CD4-positive, alpha-beta memory T cell (primary cell): ENCODE measurements at regions of chr2 and their contacts with region 1.

Region 1: GRCh38 chr2:207625018-207625907 is at the start of gene METTL21A:
- DNase-seq: peak; percentile 96 to 97 (median 97)
- H3K4me3 ChIP-seq: peak within 1 kb of the TSS; percentile 89 to 90
- H3K4me3 Mint-ChIP-seq: peak within 1 kb of the TSS; percentile 94 to 96 (median 95)
- H3K27ac ChIP-seq: peak within 1 kb of the TSS; percentile 97
- H3K27ac Mint-ChIP-seq: peak within 1 kb of the TSS; percentile 92 to 99 (median 97)
- H3K4me1 ChIP-seq: peaks cover 31% of the 10 kb centered on the region
- H3K4me1 Mint-ChIP-seq: peaks cover 16 to 46% (median 31%) of the 10 kb centered on the region in 4 donors
- H3K27me3 ChIP-seq: no peaks in the 10 kb centered on the region
- H3K27me3 Mint-ChIP-seq: no peaks in the 10 kb centered on the region
- total RNA-seq, gene METTL21A: 16.6 to 16.9 TPM

Region 2: DNA sequence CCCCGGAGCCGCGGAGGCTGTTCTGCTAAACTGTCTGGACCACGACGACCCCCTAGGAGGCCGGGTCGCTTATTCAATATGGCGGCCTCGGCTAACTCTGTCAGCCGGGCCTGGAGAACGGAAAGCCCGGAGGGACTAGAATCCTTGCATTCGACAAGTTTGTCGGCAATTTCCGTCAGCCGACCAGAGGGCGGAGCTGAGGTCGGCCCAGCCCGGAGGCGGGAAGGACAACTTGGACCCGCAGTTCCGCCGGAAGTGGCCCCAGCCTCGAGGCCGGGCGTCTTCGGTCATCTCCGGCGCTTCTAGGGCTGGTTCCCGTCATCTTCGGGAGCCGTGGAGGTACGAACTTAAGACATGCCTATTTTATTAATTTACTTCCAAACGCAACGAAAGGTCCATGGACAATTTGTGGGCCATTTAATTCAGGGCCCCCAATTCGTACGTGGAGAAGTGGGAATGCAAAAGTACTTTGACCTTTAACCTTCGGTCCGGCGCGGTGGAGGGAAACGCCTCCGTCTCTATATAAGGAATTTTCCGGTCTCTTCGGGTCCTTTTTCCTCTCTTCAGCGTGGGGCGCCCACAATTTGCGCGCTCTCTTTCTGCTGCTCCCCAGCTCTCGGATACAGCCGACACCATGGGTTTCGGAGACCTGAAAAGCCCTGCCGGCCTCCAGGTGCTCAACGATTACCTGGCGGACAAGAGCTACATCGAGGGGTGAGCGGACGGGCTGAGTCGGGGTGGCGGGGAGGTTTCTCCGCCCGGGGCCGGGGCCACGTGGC is 1465.7 kb before region 1 on chr2 and contains the starts of genes EEF1B2 and NDUFS1:
- CTCF ChIA-PET with region 1: no interaction called
- POLR2A ChIA-PET with region 1: interaction called, 3 read pairs
- intact Hi-C with region 1: loop called (anchors 1 kb)
- DNase-seq: peak; percentile 96 to 97 (median 97)
- H3K4me3 ChIP-seq: peak within 1 kb of the TSS; percentile 69 to 78
- H3K4me3 Mint-ChIP-seq: peak within 1 kb of the TSS; percentile 97 to 100 (median 100)
- H3K27ac ChIP-seq: peak within 1 kb of the TSS; percentile 94
- H3K27ac Mint-ChIP-seq: peak within 1 kb of the TSS; percentile 98 to 100 (median 99)
- H3K4me1 ChIP-seq: peaks cover 47% of the 10 kb centered on the region
- H3K4me1 Mint-ChIP-seq: peaks cover 38 to 71% (median 56%) of the 10 kb centered on the region in 4 donors
- H3K27me3 ChIP-seq: no peaks in the 10 kb centered on the region
- H3K27me3 Mint-ChIP-seq: no peaks in the 10 kb centered on the region
- total RNA-seq, gene EEF1B2: 947 to 1,026 TPM
- total RNA-seq, gene NDUFS1: 53.4 to 57.6 TPM

Region 3: GRCh38 chr2:207571370-207571769 is 53.9 kb before region 1 on chr2:
- CTCF ChIA-PET with region 1: no interaction called
- POLR2A ChIA-PET with region 1: no interaction called
- intact Hi-C with region 1: loop called (anchors 10 kb)
- DNase-seq: no peak
- H3K4me3 ChIP-seq: no peak overlapping the region
- H3K4me3 Mint-ChIP-seq: no peak overlapping the region
- H3K27ac ChIP-seq: no peak overlapping the region
- H3K27ac Mint-ChIP-seq: peak overlapping the region in 2 of 7 donors; percentile 26 to 51
- H3K4me1 ChIP-seq: no peaks in the 10 kb centered on the region
- H3K4me1 Mint-ChIP-seq: peaks cover 14 to 25% (median 20%) of the 10 kb centered on the region in 4 donors
- H3K27me3 ChIP-seq: no peaks in the 10 kb centered on the region
- H3K27me3 Mint-ChIP-seq: no peaks in the 10 kb centered on the region

Region 4: GRCh38 chr2:207725873-207726578 is 100.8 kb after region 1 on chr2:
- CTCF ChIA-PET with region 1: interaction called, 14 read pairs
- POLR2A ChIA-PET with region 1: interaction called, 4 read pairs
- intact Hi-C with region 1: no loop called
- DNase-seq: peak in 3 of 5 donors; percentile 13 to 28 (median 27)
- H3K4me3 ChIP-seq: no peak overlapping the region
- H3K4me3 Mint-ChIP-seq: no peak overlapping the region
- H3K27ac ChIP-seq: no peak overlapping the region
- H3K27ac Mint-ChIP-seq: peak overlapping the region in 3 of 7 donors; percentile 29 to 83 (median 70)
- H3K4me1 ChIP-seq: peaks cover 18% of the 10 kb centered on the region
- H3K4me1 Mint-ChIP-seq: peaks cover 24 to 36% (median 27%) of the 10 kb centered on the region in 4 donors
- H3K27me3 ChIP-seq: no peaks in the 10 kb centered on the region
- H3K27me3 Mint-ChIP-seq: no peaks in the 10 kb centered on the region

Region 5: DNA sequence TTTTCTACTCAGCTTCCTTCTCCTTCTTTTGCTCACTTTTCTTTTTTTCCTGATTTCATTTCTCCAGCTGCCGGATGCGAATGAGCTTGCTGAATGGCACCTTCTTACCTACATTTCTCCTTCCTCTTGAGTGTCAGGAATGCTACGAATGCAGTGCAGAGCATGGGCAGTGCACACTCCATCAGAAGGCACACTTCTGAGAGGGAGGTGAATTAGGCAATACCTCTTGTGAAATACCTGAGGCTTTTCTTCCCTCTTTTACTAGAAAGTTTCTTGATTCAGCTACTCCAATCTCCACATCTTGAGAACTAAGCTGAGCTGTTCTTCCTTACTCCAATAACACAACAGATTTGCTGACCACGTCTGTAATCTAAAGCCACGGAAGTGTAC is 348.9 kb after region 1 on chr2:
- CTCF ChIA-PET with region 1: interaction called, 8 read pairs
- POLR2A ChIA-PET with region 1: no interaction called
- intact Hi-C with region 1: loop called (anchors 1 kb)
- DNase-seq: no peak
- H3K4me3 ChIP-seq: no peak overlapping the region
- H3K4me3 Mint-ChIP-seq: no peak overlapping the region
- H3K27ac ChIP-seq: no peak overlapping the region
- H3K27ac Mint-ChIP-seq: no peak overlapping the region
- H3K4me1 ChIP-seq: no peaks in the 10 kb centered on the region
- H3K4me1 Mint-ChIP-seq: peaks cover 0 to 20% (median 5%) of the 10 kb centered on the region in 4 donors
- H3K27me3 ChIP-seq: no peaks in the 10 kb centered on the region
- H3K27me3 Mint-ChIP-seq: no peaks in the 10 kb centered on the region

Region 6: DNA sequence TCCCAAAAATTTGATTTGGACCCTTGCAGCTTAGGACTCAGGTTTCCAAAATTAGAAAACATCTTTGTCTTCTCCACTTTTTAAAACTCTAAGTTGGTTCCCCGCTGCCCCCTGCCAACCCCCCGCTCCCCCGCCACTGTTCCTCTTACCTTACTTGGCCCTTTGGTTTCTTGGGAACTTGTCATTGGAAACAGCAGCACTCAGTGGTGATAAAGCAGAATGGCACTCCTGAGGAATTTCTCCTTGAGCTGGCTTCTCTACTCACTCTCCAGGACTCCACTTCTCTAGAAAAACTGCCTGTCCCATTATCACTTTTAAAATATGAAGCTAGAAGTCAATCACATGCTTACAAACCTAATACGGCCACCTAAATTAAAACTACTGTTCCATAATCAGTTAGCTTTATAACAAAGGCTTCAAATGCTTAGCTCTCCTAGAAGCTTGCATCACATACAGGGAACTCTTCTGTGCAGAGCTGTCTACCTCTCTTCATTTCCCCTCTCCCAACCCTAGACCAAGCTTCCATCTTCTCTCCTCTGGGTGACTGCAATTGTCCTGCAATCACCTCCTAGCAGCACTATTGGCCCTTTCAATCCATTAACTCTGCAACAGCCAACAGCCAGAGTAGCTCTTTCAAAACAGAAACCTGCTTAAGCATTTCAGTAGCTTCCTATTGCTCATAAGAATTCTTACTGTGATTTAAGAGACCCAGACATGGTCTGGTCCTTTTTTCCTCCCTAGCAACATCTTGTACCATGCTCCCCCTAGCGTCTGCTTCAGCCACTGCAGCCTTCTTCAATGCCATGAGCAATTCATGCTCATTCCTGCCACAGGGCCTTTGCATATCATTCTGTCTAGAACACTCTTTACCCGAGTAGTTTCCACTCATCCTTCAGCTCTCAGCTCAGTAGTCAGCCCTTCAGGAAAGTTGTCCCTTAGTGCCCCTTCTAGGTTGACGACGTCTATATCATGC is 415.2 kb after region 1 on chr2:
- CTCF ChIA-PET with region 1: interaction called, 12 read pairs
- POLR2A ChIA-PET with region 1: interaction called, 6 read pairs
- intact Hi-C with region 1: loop called (anchors 1 kb)
- DNase-seq: peak; percentile 37 to 58 (median 55)
- H3K4me3 ChIP-seq: no peak overlapping the region
- H3K4me3 Mint-ChIP-seq: no peak overlapping the region
- H3K27ac ChIP-seq: no peak overlapping the region
- H3K27ac Mint-ChIP-seq: peak overlapping the region in 3 of 7 donors; percentile 31 to 42 (median 42)
- H3K4me1 ChIP-seq: no peaks in the 10 kb centered on the region
- H3K4me1 Mint-ChIP-seq: no peaks in the 10 kb centered on the region
- H3K27me3 ChIP-seq: no peaks in the 10 kb centered on the region
- H3K27me3 Mint-ChIP-seq: peaks cover 0 to 2% of the 10 kb centered on the region in 2 donors

Region 7: DNA sequence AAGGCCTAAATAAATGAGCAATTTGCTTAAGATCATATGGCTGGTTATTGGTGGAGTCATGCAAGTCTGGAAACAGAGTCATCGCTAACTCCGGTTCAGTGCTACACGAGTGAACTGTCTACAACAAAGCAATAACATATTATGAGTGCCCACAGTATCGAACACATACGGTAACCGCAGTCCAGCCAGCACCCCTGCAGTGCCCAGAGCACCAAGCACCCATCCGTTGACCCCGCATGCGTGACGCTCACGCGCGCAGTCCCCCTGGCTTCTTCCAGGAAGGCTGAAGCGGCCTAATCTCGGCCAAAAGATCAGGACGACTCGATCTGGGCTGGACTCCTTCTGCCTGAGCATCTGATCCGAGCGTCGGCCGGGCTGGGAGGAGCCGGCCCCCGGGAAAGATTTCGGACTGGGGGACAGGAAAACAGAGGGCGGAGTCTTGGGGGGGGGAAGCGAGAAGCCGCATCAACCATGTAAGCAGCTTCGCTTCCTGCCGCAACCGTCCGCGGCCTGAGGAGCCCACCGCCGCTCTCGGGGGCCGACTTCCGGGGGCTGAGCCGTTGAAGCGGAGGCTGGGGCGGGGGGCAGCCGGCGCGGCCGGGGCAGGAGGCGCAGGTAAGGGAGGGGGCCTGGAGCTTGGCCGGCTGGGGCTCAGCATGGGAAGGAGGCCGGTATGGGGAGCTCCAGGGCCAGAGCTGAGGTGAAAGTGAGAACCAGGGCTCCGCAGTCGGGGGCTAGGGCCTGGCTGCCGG is 640.7 kb after region 1 on chr2 and contains the start of gene PIKFYVE:
- CTCF ChIA-PET with region 1: interaction called, 3 read pairs
- POLR2A ChIA-PET with region 1: interaction called, 13 read pairs
- intact Hi-C with region 1: loop called (anchors 1 kb)
- DNase-seq: peak; percentile 80 to 92 (median 87)
- H3K4me3 ChIP-seq: peak within 1 kb of the TSS; percentile 51 to 95
- H3K4me3 Mint-ChIP-seq: peak within 1 kb of the TSS; percentile 92 to 99 (median 96)
- H3K27ac ChIP-seq: peak within 1 kb of the TSS; percentile 75
- H3K27ac Mint-ChIP-seq: peak within 1 kb of the TSS; percentile 86 to 97 (median 95)
- H3K4me1 ChIP-seq: peaks cover 46% of the 10 kb centered on the region
- H3K4me1 Mint-ChIP-seq: peaks cover 27 to 60% (median 39%) of the 10 kb centered on the region in 4 donors
- H3K27me3 ChIP-seq: no peaks in the 10 kb centered on the region
- H3K27me3 Mint-ChIP-seq: no peaks in the 10 kb centered on the region
- total RNA-seq, gene PIKFYVE: 44.5 to 45.8 TPM